GM12878 (cell line): ENCODE measurements at regions of chr11 and their contacts with region 1.

Region 1: GRCh38 chr11:78424334-78425270 is 7.0 kb upstream of the GAB2 start:
- DNase-seq: peak; percentile 70
- ATAC-seq: peak; percentile 12
- H3K4me3 ChIP-seq: peak overlapping the region; percentile 18; the same call in 1 of the 2 replicates
- H3K27ac ChIP-seq: peak overlapping the region; percentile 73
- H3K4me1 ChIP-seq: peaks cover 66% of the 10 kb centered on the region
- H3K27me3 ChIP-seq: no peaks in the 10 kb centered on the region
- CTCF ChIP-seq: no peak
- EP300 ChIP-seq: no peak
- POLR2A ChIP-seq: no peak
- RAD21 ChIP-seq: no peak

Region 2: DNA sequence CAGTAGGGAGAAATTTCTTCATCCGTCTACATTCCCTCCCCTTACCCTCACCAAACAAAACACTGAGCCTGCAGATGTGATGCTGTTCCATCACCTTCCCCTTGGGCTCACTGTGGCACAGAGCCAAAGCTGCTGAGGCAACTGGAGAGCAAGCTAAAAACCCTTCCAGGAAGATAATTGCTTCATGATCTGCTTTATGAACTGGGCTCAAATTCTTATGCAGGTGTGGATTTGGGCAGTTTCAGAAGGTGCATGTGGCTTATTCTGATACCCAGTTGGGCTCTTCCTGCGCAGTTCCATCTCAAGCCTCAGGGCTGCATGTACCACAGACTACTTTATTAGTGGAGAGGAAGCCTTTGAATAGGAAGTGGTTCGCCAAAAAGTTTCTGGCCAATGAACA is 545.4 kb before region 1 on chr11:
- CTCF ChIA-PET with region 1: no interaction called
- POLR2A ChIA-PET with region 1: no interaction called
- RAD21 ChIA-PET with region 1: no interaction called
- SMC1A ChIA-PET with region 1: no interaction called
- in situ Hi-C with region 1: no loop called
- intact Hi-C with region 1: no loop called
- DNase-seq: peak; percentile 3
- ATAC-seq: peak; percentile 49; the same call in 2 of the 3 replicates
- H3K4me3 ChIP-seq: no peak overlapping the region
- H3K27ac ChIP-seq: no peak overlapping the region
- H3K4me1 ChIP-seq: peaks cover 12% of the 10 kb centered on the region
- H3K27me3 ChIP-seq: no peaks in the 10 kb centered on the region
- CTCF ChIP-seq: peak in 1 of 3 experiments; percentile 25; a peak in 1 of 6 replicates
- EP300 ChIP-seq: no peak
- POLR2A ChIP-seq: no peak
- RAD21 ChIP-seq: no peak

Region 3: GRCh38 chr11:78139422-78140391 is 284.9 kb before region 1 on chr11 and contains the start of gene ALG8:
- CTCF ChIA-PET with region 1: no interaction called
- POLR2A ChIA-PET with region 1: no interaction called
- RAD21 ChIA-PET with region 1: no interaction called
- SMC1A ChIA-PET with region 1: no interaction called
- in situ Hi-C with region 1: no loop called
- intact Hi-C with region 1: loop called (anchors 5 kb)
- DNase-seq: peak; percentile 90
- ATAC-seq: peak; percentile 96
- H3K4me3 ChIP-seq: peak within 1 kb of the TSS; percentile 88
- H3K27ac ChIP-seq: peak within 1 kb of the TSS; percentile 82
- H3K4me1 ChIP-seq: peaks cover 11% of the 10 kb centered on the region
- H3K27me3 ChIP-seq: no peaks in the 10 kb centered on the region
- CTCF ChIP-seq: no peak
- EP300 ChIP-seq: 0 out of 4 replicates have a peak, but pooled peaks of 1 of the 2 experiments have one; percentile 11
- POLR2A ChIP-seq: peak; percentile 95
- RAD21 ChIP-seq: no peak
- polyA plus RNA-seq, gene ALG8: 79.1 to 105 TPM

Region 4: GRCh38 chr11:78251083-78251775 is 173.4 kb before region 1 on chr11:
- CTCF ChIA-PET with region 1: no interaction called
- POLR2A ChIA-PET with region 1: no interaction called
- RAD21 ChIA-PET with region 1: no interaction called
- SMC1A ChIA-PET with region 1: no interaction called
- in situ Hi-C with region 1: no loop called
- intact Hi-C with region 1: no loop called
- DNase-seq: no peak
- ATAC-seq: no peak
- H3K4me3 ChIP-seq: no peak overlapping the region
- H3K27ac ChIP-seq: no peak overlapping the region
- H3K4me1 ChIP-seq: no peaks in the 10 kb centered on the region
- H3K27me3 ChIP-seq: no peaks in the 10 kb centered on the region
- CTCF ChIP-seq: no peak
- EP300 ChIP-seq: no peak
- POLR2A ChIP-seq: no peak
- RAD21 ChIP-seq: no peak

Region 5: GRCh38 chr11:78465169-78465942 is 40.8 kb after region 1 on chr11:
- CTCF ChIA-PET with region 1: interaction called, 9 read pairs
- POLR2A ChIA-PET with region 1: interaction called, 5 read pairs
- RAD21 ChIA-PET with region 1: interaction called, 31 read pairs
- SMC1A ChIA-PET with region 1: interaction called, 16 read pairs
- in situ Hi-C with region 1: no loop called
- intact Hi-C with region 1: loop called (anchors 1 kb)
- DNase-seq: peak; percentile 93
- ATAC-seq: peak; percentile 100
- H3K4me3 ChIP-seq: peak overlapping the region; percentile 35; the same call in 1 of the 2 replicates
- H3K27ac ChIP-seq: peak overlapping the region; percentile 90
- H3K4me1 ChIP-seq: peaks cover 26% of the 10 kb centered on the region
- H3K27me3 ChIP-seq: no peaks in the 10 kb centered on the region
- CTCF ChIP-seq: no peak
- EP300 ChIP-seq: peak; percentile 63 to 84
- POLR2A ChIP-seq: peak; percentile 78
- RAD21 ChIP-seq: no peak

Region 6: GRCh38 chr11:78533399-78533798 is 108.8 kb after region 1 on chr11:
- CTCF ChIA-PET with region 1: interaction called, 3 read pairs
- POLR2A ChIA-PET with region 1: no interaction called
- RAD21 ChIA-PET with region 1: interaction called, 7 read pairs
- SMC1A ChIA-PET with region 1: interaction called, 12 read pairs
- in situ Hi-C with region 1: no loop called
- intact Hi-C with region 1: no loop called
- DNase-seq: peak; percentile 44
- ATAC-seq: peak; percentile 86
- H3K4me3 ChIP-seq: no peak overlapping the region
- H3K27ac ChIP-seq: peak overlapping the region; percentile 74
- H3K4me1 ChIP-seq: peaks cover 21% of the 10 kb centered on the region
- H3K27me3 ChIP-seq: no peaks in the 10 kb centered on the region
- CTCF ChIP-seq: no peak
- EP300 ChIP-seq: no peak
- POLR2A ChIP-seq: no peak
- RAD21 ChIP-seq: no peak